Activated naive CD4-positive, alpha-beta T cell treated with anti-CD3 and anti-CD28 coated beads for 36 hours (primary cell): ENCODE measurements at regions of chr17 and their contacts with region 1.

Region 1: GRCh38 chr17:80101011-80101945 is at the start of gene GAA:
- DNase-seq: peak; percentile 84
- H3K4me3 Mint-ChIP-seq: peak within 1 kb of the TSS; percentile 92
- H3K27ac Mint-ChIP-seq: peak within 1 kb of the TSS; percentile 59
- H3K4me1 Mint-ChIP-seq: peaks cover 28% of the 10 kb centered on the region
- H3K27me3 Mint-ChIP-seq: no peaks in the 10 kb centered on the region
- total RNA-seq, gene GAA: 32.1 to 33.2 TPM

Region 2: GRCh38 chr17:80008383-80008840 is 92.9 kb before region 1 on chr17:
- CTCF ChIA-PET with region 1: interaction called, 5 read pairs
- intact Hi-C with region 1: loop called (anchors 5 kb)
- DNase-seq: peak; percentile 86
- H3K4me3 Mint-ChIP-seq: no peak overlapping the region
- H3K27ac Mint-ChIP-seq: no peak overlapping the region
- H3K4me1 Mint-ChIP-seq: peaks cover 6% of the 10 kb centered on the region
- H3K27me3 Mint-ChIP-seq: no peaks in the 10 kb centered on the region

Region 3: GRCh38 chr17:80082403-80083135 is 18.7 kb before region 1 on chr17:
- CTCF ChIA-PET with region 1: interaction called, 11 read pairs
- intact Hi-C with region 1: no loop called
- DNase-seq: peak; percentile 76
- H3K4me3 Mint-ChIP-seq: no peak overlapping the region
- H3K27ac Mint-ChIP-seq: no peak overlapping the region
- H3K4me1 Mint-ChIP-seq: peaks cover 3% of the 10 kb centered on the region
- H3K27me3 Mint-ChIP-seq: no peaks in the 10 kb centered on the region

Region 4: GRCh38 chr17:80114758-80115157 is 13.5 kb after region 1 on chr17:
- CTCF ChIA-PET with region 1: interaction called, 10 read pairs
- intact Hi-C with region 1: no loop called
- DNase-seq: no peak
- H3K4me3 Mint-ChIP-seq: no peak overlapping the region
- H3K27ac Mint-ChIP-seq: no peak overlapping the region
- H3K4me1 Mint-ChIP-seq: peaks cover 3% of the 10 kb centered on the region
- H3K27me3 Mint-ChIP-seq: no peaks in the 10 kb centered on the region

Region 5: GRCh38 chr17:80212962-80213642 is 111.8 kb after region 1 on chr17:
- CTCF ChIA-PET with region 1: no interaction called
- intact Hi-C with region 1: no loop called
- DNase-seq: no peak
- H3K4me3 Mint-ChIP-seq: no peak overlapping the region
- H3K27ac Mint-ChIP-seq: no peak overlapping the region
- H3K4me1 Mint-ChIP-seq: peaks cover 5% of the 10 kb centered on the region
- H3K27me3 Mint-ChIP-seq: no peaks in the 10 kb centered on the region

Region 6: GRCh38 chr17:81057079-81057730 is 955.9 kb after region 1 on chr17:
- CTCF ChIA-PET with region 1: no interaction called
- intact Hi-C with region 1: no loop called
- DNase-seq: no peak
- H3K4me3 Mint-ChIP-seq: no peak overlapping the region
- H3K27ac Mint-ChIP-seq: no peak overlapping the region
- H3K4me1 Mint-ChIP-seq: peaks cover 2% of the 10 kb centered on the region
- H3K27me3 Mint-ChIP-seq: no peaks in the 10 kb centered on the region